ENCODE measurements at regions of chr16 and their contacts with region 1.

Region 1: DNA sequence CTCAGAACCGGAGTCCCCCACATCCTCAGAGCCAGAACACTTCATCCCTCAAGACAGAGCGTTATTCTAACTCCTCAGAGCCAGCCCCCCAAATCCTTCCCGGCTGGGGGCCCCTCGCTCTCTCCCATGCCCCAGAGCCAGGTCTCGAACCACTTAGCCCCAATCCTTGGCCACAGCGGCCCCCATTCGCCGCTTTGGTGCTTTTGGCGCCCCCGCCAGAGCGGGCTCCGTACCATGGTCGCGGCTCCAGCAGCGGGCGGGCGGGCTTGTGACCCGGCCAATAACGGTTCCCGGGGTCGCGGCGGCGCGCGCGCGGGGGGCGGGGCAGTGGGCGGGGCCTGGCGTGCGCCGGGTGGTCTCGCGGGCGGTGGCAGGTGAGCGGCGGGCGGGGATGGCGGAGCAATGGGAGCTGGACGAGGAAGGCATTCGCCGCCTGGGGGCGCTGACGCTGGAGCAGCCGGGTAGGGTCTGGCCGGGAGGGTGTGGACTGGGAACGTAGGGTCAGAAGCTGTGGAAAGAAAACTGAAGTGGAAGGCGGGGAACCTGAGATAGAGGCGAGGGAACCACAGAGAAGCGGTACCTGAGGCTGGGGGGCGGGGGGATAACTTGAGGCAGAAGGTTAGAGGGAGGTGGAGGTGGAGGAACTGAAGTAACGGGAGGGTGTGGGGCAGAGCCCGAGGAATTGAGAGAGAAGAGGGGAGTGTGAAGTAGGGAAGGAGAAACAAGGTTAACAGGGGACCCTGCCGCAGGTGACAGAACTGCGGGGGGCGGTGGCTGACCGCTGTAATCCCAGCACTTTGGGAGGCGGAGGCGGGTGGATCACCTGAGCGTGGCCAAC is at the starts of genes KCTD19 and LRRC36:
- H3K4me3 ChIP-seq: peak within 1 kb of the TSS; percentile 55
- H3K27ac ChIP-seq: peak within 1 kb of the TSS; percentile 1; the same call in 1 of the 2 replicates
- H3K4me1 ChIP-seq: no peaks in the 10 kb centered on the region
- CTCF ChIP-seq: peak; percentile 85

Region 2: GRCh38 chr16:67284699-67285646 is 41.7 kb before region 1 on chr16:
- CTCF ChIA-PET with region 1: interaction called, 11 read pairs
- POLR2A ChIA-PET with region 1: no interaction called
- H3K4me3 ChIP-seq: no peak overlapping the region
- H3K27ac ChIP-seq: no peak overlapping the region
- H3K4me1 ChIP-seq: no peaks in the 10 kb centered on the region
- CTCF ChIP-seq: peak; percentile 48; the same call in 1 of the 2 replicates

Region 3: DNA sequence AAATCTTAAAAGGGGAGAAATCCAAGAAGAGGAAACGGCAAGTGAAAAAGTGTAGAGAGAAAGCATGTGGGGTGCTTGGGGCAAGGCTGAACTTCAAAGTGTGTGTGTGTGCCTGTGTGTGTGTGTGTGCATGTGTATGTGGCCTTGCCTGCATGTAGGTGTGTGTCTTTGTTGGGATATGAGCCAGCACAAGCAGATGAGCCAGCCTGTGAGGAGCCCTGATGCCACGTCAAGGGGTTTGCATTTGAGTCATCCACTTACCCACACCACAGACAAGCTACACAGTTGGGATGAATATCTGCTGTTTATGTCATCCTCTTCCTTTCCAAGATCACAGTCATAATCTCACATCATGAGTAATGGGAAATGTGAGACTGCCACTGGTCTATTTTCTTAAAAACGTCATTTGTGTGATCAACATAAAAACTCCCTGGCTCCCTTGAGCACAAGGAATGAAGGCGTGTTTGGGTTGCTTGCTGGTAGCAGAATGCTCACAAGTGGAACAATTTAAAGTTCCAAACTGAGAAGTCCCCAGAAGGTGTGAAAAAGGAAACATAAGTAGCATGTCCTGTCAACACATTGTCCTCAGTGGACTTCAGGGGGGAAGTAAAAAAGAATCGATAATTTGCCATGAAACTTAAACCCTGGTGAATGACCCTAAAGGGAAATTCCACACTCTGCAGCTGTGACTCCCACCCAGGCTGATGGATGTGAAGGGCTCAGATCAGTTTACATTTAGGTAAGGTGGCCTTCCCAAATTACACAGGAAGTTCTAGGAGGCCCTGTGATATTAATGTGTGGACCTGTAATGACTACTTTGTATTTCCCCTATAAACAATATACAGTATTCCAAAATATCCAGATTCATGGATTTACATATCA is 14.8 kb before region 1 on chr16:
- CTCF ChIA-PET with region 1: interaction called, 18 read pairs
- POLR2A ChIA-PET with region 1: no interaction called
- H3K4me3 ChIP-seq: no peak overlapping the region
- H3K27ac ChIP-seq: no peak overlapping the region
- H3K4me1 ChIP-seq: peaks cover 8% of the 10 kb centered on the region; the same call in 1 of the 2 replicates
- CTCF ChIP-seq: no peak

Region 4: DNA sequence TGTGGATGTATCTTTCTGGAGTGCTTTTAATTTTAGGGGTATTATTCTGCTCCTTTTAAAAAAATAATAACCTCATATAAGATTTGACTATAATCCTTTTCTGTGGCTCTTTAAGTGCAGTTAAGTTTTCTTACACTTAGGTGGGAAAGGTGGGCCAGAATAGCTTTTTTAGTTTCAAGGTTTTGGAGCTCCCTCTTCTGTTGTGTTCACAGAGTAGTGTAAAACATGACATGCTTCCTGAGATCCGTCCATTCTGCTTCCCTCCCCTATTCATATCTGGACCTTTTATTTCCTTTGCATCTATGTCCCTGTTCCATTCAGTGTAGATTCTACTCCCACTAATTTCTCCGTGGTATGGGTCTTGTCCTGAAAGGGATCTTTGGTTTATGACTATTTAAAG is 12.8 kb after region 1 on chr16:
- CTCF ChIA-PET with region 1: interaction called, 10 read pairs
- POLR2A ChIA-PET with region 1: no interaction called
- H3K4me3 ChIP-seq: no peak overlapping the region
- H3K27ac ChIP-seq: no peak overlapping the region
- H3K4me1 ChIP-seq: no peaks in the 10 kb centered on the region
- CTCF ChIP-seq: no peak

Measured in HEK293 (cell line).